Colonic mucosa (tissue), 4 donors: ENCODE measurements at regions of chr12 and their contacts with region 1.

Region 1: DNA sequence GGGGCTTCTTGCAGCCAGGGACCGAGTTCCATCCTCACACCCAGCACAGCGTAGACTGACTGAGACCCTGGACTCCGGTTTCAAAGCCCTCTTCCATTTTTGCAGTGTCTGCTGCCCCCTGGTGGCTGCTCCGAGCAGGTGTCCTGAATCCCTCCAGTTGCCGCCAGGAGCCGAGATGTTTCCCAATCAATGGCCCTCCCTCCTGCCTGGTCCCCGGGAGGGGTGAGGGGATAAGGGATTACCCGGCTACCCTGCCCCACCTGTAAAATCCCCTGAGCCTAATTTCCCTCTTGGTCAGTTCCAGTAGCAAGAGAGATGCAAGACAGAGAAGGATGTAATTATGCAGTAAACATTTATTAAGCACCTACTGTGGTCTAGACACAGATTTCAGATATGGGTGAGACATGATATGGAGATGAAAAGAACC is 55.0 kb downstream of the PHETA1 start:
- DNase-seq: peak; percentile 56
- H3K4me3 ChIP-seq: no peak overlapping the region
- H3K27ac ChIP-seq: no peak overlapping the region
- H3K4me1 ChIP-seq: no peaks in the 10 kb centered on the region
- H3K27me3 ChIP-seq: no peaks in the 10 kb centered on the region
- CTCF ChIP-seq: peak; percentile 92

Region 2: GRCh38 chr12:110896559-110896958 is 417.3 kb before region 1 on chr12:
- intact Hi-C with region 1: loop called (anchors 10 kb)
- DNase-seq: no peak
- H3K4me3 ChIP-seq: no peak overlapping the region
- H3K27ac ChIP-seq: no peak overlapping the region
- H3K4me1 ChIP-seq: no peaks in the 10 kb centered on the region
- H3K27me3 ChIP-seq: no peaks in the 10 kb centered on the region
- CTCF ChIP-seq: no peak

Region 3: GRCh38 chr12:110937104-110937641 is 376.7 kb before region 1 on chr12:
- intact Hi-C with region 1: loop called (anchors 5 kb)
- DNase-seq: peak; percentile 41
- H3K4me3 ChIP-seq: no peak overlapping the region
- H3K27ac ChIP-seq: no peak overlapping the region
- H3K4me1 ChIP-seq: no peaks in the 10 kb centered on the region
- H3K27me3 ChIP-seq: no peaks in the 10 kb centered on the region
- CTCF ChIP-seq: peak; percentile 89

Region 4: GRCh38 chr12:111029732-111030131 is 284.1 kb before region 1 on chr12:
- intact Hi-C with region 1: loop called (anchors 5 kb)
- DNase-seq: no peak
- H3K4me3 ChIP-seq: no peak overlapping the region
- H3K27ac ChIP-seq: no peak overlapping the region
- H3K4me1 ChIP-seq: no peaks in the 10 kb centered on the region
- H3K27me3 ChIP-seq: peaks cover 23% of the 10 kb centered on the region
- CTCF ChIP-seq: no peak

Region 5: DNA sequence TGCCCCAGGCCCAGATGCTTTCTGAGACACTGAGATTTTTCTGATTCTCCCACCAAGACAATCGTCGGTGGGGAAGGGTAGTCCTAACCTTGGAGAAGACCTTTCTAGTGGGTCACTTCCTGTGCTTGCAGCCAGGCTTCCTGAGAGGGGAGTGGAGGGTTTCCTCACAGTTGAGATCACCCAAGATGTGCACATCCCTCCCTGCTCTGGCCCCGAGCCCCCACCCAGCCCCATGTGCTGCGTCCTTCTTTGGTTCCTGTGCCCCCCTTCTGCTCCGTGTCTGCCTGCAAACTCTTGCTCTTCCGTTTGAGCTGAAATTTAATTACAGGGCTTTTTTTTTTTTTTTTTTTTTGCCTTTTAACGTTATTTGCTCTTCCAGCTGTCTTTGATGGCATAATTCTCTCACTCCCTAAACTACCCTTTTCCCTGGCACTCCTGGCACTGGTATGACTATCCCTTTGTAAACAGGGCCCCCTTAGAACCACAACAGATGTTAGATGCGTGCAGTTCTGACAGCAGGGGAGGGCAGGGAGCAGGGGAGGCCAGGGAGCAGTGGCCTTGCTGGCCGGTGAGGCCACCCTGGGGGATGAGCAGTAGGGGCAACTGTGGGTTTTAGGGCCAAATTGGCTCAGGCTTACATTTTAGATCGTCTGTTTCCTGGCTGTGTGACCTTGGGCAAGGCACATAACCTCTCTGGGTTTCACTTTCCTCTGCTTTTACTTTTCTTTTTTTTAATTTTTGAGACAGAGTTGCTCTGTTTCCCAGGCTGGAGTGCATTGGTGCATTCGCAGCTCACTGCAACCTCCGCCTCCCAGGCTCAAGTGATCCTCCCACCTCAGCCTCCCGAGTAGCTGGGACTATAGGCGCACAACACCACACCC is 89.4 kb before region 1 on chr12:
- intact Hi-C with region 1: no loop called
- DNase-seq: no peak
- H3K4me3 ChIP-seq: no peak overlapping the region
- H3K27ac ChIP-seq: no peak overlapping the region
- H3K4me1 ChIP-seq: no peaks in the 10 kb centered on the region
- H3K27me3 ChIP-seq: no peaks in the 10 kb centered on the region
- CTCF ChIP-seq: no peak

Region 6: GRCh38 chr12:111975161-111975931 is 661.5 kb after region 1 on chr12:
- intact Hi-C with region 1: no loop called
- DNase-seq: no peak
- H3K4me3 ChIP-seq: no peak overlapping the region
- H3K27ac ChIP-seq: no peak overlapping the region
- H3K4me1 ChIP-seq: no peaks in the 10 kb centered on the region
- H3K27me3 ChIP-seq: no peaks in the 10 kb centered on the region
- CTCF ChIP-seq: no peak